Esophagus squamous epithelium (tissue), 5 donors: ENCODE measurements at regions of chr7 and their contacts with region 1.

Region 1: DNA sequence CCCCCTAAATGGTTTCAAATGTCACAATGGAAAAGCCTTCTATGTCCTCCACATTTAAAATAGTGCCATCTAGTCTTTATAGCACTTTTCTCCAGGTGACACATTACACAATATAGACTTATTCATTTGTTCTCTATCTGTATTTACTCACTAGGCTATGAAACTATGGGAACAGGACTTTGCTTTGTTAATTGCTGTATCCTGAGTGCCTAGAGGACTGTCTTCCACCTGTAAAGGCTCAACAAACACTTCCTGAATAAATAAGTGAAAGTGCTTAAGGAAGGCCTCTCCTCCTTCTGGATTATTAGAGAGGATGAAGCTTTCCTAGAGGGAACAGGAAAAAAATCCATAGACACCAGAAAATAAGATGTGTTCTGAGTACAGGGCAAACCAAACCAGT is 397.6 kb upstream of the LRRN3 start:
- DNase-seq: no peak
- H3K4me3 ChIP-seq: no peak overlapping the region
- H3K27ac ChIP-seq: no peak overlapping the region
- H3K4me1 ChIP-seq: no peaks in the 10 kb centered on the region
- H3K27me3 ChIP-seq: no peaks in the 10 kb centered on the region
- CTCF ChIP-seq: no peak
- POLR2A ChIP-seq: no peak

Region 2: GRCh38 chr7:110358028-110358427 is 335.3 kb before region 1 on chr7:
- intact Hi-C with region 1: loop called (anchors 5 kb)
- DNase-seq: no peak
- H3K4me3 ChIP-seq: no peak overlapping the region
- H3K27ac ChIP-seq: no peak overlapping the region
- H3K4me1 ChIP-seq: no peaks in the 10 kb centered on the region
- H3K27me3 ChIP-seq: no peaks in the 10 kb centered on the region
- CTCF ChIP-seq: no peak
- POLR2A ChIP-seq: no peak